ENCODE measurements at regions of chr13 and their contacts with region 1.

Region 1: GRCh38 chr13:40445557-40445990 is 220.9 kb downstream of the FOXO1 start:
- DNase-seq: peak; percentile 97
- ATAC-seq: peak; percentile 96
- H3K4me3 ChIP-seq: peak overlapping the region in 1 of 5 experiments; percentile 53
- H3K4me3 Mint-ChIP-seq: peak overlapping the region; percentile 50
- H3K27ac ChIP-seq: peak overlapping the region; percentile 93 to 97
- H3K27ac Mint-ChIP-seq: peak overlapping the region; percentile 96
- H3K4me1 ChIP-seq: peaks cover 57 to 62% of the 10 kb centered on the region in 2 donors
- H3K4me1 Mint-ChIP-seq: peaks cover 68% of the 10 kb centered on the region
- H3K27me3 ChIP-seq: no peaks in the 10 kb centered on the region
- H3K27me3 Mint-ChIP-seq: no peaks in the 10 kb centered on the region
- CTCF ChIP-seq: no peak

Region 2: DNA sequence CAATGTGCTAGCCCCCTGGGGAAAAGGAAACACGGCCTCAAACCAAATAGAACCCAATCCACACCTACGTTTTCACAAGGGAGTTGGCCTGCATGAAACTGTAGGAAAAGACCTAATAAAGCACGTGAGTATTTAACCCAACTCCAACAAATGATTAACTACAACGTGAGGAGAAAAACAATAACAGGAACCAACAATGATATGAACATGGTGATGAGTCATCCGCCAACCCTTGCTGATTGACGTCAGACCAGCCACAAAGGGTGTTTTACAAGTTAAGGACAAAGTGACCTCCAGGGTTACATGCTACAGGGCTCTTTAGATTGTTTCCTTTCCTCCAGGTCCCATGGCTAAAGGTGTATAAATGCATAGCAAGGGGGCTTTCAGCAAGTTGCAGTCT is 329.6 kb before region 1 on chr13:
- CTCF ChIA-PET with region 1: no interaction called
- POLR2A ChIA-PET with region 1: no interaction called
- intact Hi-C with region 1: loop called (anchors 1 kb)
- DNase-seq: no peak
- ATAC-seq: peak; percentile 78
- H3K4me3 ChIP-seq: no peak overlapping the region
- H3K4me3 Mint-ChIP-seq: peak overlapping the region; percentile 58
- H3K27ac ChIP-seq: no peak overlapping the region
- H3K27ac Mint-ChIP-seq: peak overlapping the region; percentile 72
- H3K4me1 ChIP-seq: peaks cover 9 to 10% of the 10 kb centered on the region in 2 donors
- H3K4me1 Mint-ChIP-seq: peaks cover 28% of the 10 kb centered on the region
- H3K27me3 ChIP-seq: no peaks in the 10 kb centered on the region
- H3K27me3 Mint-ChIP-seq: no peaks in the 10 kb centered on the region
- CTCF ChIP-seq: no peak

Region 3: GRCh38 chr13:40206241-40207000 is 239.2 kb before region 1 on chr13:
- CTCF ChIA-PET with region 1: no interaction called
- POLR2A ChIA-PET with region 1: no interaction called
- intact Hi-C with region 1: loop called (anchors 1 kb)
- DNase-seq: peak; percentile 78
- ATAC-seq: peak; percentile 68
- H3K4me3 ChIP-seq: peak overlapping the region in 2 of 5 experiments; percentile 22 to 36
- H3K4me3 Mint-ChIP-seq: peak overlapping the region; percentile 80
- H3K27ac ChIP-seq: peak overlapping the region; percentile 88 to 90
- H3K27ac Mint-ChIP-seq: peak overlapping the region; percentile 99
- H3K4me1 ChIP-seq: peaks cover 66 to 67% of the 10 kb centered on the region in 2 donors
- H3K4me1 Mint-ChIP-seq: peaks cover 68% of the 10 kb centered on the region
- H3K27me3 ChIP-seq: no peaks in the 10 kb centered on the region
- H3K27me3 Mint-ChIP-seq: no peaks in the 10 kb centered on the region
- CTCF ChIP-seq: no peak

Region 4: GRCh38 chr13:40340368-40341095 is 105.0 kb before region 1 on chr13:
- CTCF ChIA-PET with region 1: no interaction called
- POLR2A ChIA-PET with region 1: no interaction called
- intact Hi-C with region 1: no loop called
- DNase-seq: no peak
- ATAC-seq: no peak
- H3K4me3 ChIP-seq: no peak overlapping the region
- H3K4me3 Mint-ChIP-seq: no peak overlapping the region
- H3K27ac ChIP-seq: no peak overlapping the region
- H3K27ac Mint-ChIP-seq: no peak overlapping the region
- H3K4me1 ChIP-seq: peaks cover 0 to 8% of the 10 kb centered on the region in 2 donors
- H3K4me1 Mint-ChIP-seq: peaks cover 7% of the 10 kb centered on the region
- H3K27me3 ChIP-seq: no peaks in the 10 kb centered on the region
- H3K27me3 Mint-ChIP-seq: no peaks in the 10 kb centered on the region
- CTCF ChIP-seq: no peak

Region 5: DNA sequence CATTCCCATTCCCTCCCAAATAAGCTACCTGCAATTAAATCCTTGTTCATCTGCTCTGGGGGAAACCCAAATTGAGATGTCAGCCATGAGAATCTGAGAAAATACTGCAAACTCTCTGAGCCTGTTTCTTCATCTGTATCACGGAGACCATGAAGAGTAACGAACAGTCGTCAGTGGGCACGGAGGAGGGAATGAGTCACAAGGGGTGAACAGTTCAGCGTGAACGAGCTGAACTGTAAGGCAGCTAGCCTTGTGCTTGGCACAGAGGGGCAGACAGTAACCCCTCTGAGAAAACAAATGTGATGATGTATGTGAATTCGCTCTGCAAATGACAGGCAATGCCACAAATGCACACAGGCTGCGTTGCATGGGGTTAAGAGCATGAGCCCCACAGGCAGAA is 67.8 kb before region 1 on chr13:
- CTCF ChIA-PET with region 1: no interaction called
- POLR2A ChIA-PET with region 1: no interaction called
- intact Hi-C with region 1: no loop called
- DNase-seq: no peak
- ATAC-seq: peak; percentile 42
- H3K4me3 ChIP-seq: no peak overlapping the region
- H3K4me3 Mint-ChIP-seq: no peak overlapping the region
- H3K27ac ChIP-seq: no peak overlapping the region
- H3K27ac Mint-ChIP-seq: no peak overlapping the region
- H3K4me1 ChIP-seq: peaks cover 8 to 22% of the 10 kb centered on the region in 2 donors
- H3K4me1 Mint-ChIP-seq: peaks cover 31% of the 10 kb centered on the region
- H3K27me3 ChIP-seq: no peaks in the 10 kb centered on the region
- H3K27me3 Mint-ChIP-seq: no peaks in the 10 kb centered on the region
- CTCF ChIP-seq: no peak

Region 6: DNA sequence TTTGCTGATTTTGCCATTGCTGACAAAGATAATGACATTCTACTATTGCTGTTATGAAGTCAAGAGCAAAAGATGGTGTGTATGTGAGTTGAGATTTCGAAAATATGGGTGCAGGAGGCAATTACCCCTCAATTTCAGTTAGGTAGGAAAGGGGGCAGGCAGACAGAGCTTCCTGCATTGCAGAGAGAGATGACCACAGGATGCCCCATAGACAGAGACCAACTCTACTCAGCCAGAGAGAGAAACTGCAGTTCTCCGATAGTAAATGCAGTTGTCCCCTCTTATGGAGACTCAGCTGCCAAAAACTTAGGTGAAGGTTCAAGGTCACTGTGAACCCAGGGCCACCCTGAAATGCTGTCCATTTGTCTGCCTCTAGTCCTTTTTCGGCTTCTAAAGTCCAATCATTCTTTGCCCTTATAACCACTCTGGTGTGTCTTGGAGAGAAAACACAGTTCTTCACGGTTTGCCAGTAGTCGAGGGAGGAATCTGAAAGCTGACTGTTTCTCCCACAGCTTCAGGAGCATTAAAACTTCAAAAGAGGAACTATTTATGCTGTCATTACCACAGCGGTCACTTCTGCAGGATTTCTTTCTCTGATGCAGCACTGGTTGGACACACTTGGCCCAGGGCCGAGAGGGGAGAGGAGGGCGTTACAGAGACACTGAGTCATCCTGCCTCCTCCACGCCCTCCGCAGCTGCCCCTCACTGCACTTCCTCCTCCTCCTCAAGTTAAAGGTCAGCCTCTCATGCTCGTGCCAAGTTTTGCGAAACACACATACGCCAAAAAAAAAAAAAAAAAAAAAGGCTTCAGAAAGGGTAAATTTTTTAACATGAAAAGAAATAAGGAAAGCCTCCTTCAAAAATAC is 43.4 kb before region 1 on chr13:
- CTCF ChIA-PET with region 1: interaction called, 4 read pairs
- POLR2A ChIA-PET with region 1: interaction called, 4 read pairs
- intact Hi-C with region 1: loop called (anchors 1 kb)
- DNase-seq: peak; percentile 56
- ATAC-seq: peak; percentile 99
- H3K4me3 ChIP-seq: peak overlapping the region in 3 of 5 experiments; percentile 16 to 33 (median 32)
- H3K4me3 Mint-ChIP-seq: peak overlapping the region; percentile 75
- H3K27ac ChIP-seq: no peak overlapping the region
- H3K27ac Mint-ChIP-seq: peak overlapping the region; percentile 75
- H3K4me1 ChIP-seq: peaks cover 15 to 18% of the 10 kb centered on the region in 2 donors
- H3K4me1 Mint-ChIP-seq: peaks cover 29% of the 10 kb centered on the region
- H3K27me3 ChIP-seq: no peaks in the 10 kb centered on the region
- H3K27me3 Mint-ChIP-seq: no peaks in the 10 kb centered on the region
- CTCF ChIP-seq: no peak

Region 7: DNA sequence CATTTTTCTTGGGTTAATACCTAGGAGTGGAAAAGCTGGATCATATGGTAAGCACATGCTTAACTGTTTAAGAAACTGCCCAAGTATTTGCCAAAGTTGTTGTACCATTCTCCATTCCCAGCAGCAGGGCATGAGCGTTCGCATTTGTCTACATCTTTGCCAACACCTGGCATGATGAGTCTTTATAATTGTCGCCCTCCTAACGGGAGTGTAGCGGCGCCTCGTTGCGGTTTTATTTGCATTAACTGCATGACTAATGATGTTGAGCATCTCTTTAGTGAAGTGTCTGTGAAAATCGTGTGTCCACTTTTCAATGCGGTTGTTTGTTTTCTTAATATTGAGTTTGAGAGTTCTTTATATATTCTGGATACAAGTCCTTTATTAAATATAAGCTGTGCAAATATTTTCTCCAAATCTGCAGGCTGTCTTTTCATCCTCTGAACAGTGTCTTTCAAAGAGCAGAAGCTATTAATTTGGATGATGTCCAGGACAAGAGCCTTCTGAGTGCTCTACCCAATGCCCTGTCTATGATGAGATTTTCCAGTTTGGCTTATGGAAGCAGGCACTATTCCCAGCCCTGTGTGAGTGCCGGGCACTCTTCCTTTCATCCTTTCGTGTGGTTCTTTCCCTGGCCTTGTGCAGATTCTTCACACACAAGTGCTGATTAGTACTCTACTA is 18.9 kb after region 1 on chr13:
- CTCF ChIA-PET with region 1: interaction called, 4 read pairs
- POLR2A ChIA-PET with region 1: interaction called, 3 read pairs
- intact Hi-C with region 1: loop called (anchors 1 kb)
- DNase-seq: peak; percentile 56
- ATAC-seq: peak; percentile 85
- H3K4me3 ChIP-seq: no peak overlapping the region
- H3K4me3 Mint-ChIP-seq: peak overlapping the region; percentile 4
- H3K27ac ChIP-seq: no peak overlapping the region
- H3K27ac Mint-ChIP-seq: no peak overlapping the region
- H3K4me1 ChIP-seq: peaks cover 14% of the 10 kb centered on the region in 2 donors
- H3K4me1 Mint-ChIP-seq: peaks cover 25% of the 10 kb centered on the region
- H3K27me3 ChIP-seq: no peaks in the 10 kb centered on the region
- H3K27me3 Mint-ChIP-seq: no peaks in the 10 kb centered on the region
- CTCF ChIP-seq: no peak

Region 8: GRCh38 chr13:40589285-40590109 is 143.9 kb after region 1 on chr13:
- CTCF ChIA-PET with region 1: no interaction called
- POLR2A ChIA-PET with region 1: interaction called, 3 read pairs
- intact Hi-C with region 1: loop called (anchors 2 kb)
- DNase-seq: peak; percentile 83
- ATAC-seq: peak; percentile 91
- H3K4me3 ChIP-seq: peak overlapping the region; percentile 12 to 58 (median 24)
- H3K4me3 Mint-ChIP-seq: peak overlapping the region; percentile 65
- H3K27ac ChIP-seq: peak overlapping the region; percentile 85 to 95
- H3K27ac Mint-ChIP-seq: peak overlapping the region; percentile 89
- H3K4me1 ChIP-seq: peaks cover 91 to 98% of the 10 kb centered on the region in 2 donors
- H3K4me1 Mint-ChIP-seq: peaks cover 94% of the 10 kb centered on the region
- H3K27me3 ChIP-seq: no peaks in the 10 kb centered on the region
- H3K27me3 Mint-ChIP-seq: no peaks in the 10 kb centered on the region
- CTCF ChIP-seq: no peak